SK-N-SH (cell line): ENCODE measurements at regions of chr3 and their contacts with region 1.

Region 1: DNA sequence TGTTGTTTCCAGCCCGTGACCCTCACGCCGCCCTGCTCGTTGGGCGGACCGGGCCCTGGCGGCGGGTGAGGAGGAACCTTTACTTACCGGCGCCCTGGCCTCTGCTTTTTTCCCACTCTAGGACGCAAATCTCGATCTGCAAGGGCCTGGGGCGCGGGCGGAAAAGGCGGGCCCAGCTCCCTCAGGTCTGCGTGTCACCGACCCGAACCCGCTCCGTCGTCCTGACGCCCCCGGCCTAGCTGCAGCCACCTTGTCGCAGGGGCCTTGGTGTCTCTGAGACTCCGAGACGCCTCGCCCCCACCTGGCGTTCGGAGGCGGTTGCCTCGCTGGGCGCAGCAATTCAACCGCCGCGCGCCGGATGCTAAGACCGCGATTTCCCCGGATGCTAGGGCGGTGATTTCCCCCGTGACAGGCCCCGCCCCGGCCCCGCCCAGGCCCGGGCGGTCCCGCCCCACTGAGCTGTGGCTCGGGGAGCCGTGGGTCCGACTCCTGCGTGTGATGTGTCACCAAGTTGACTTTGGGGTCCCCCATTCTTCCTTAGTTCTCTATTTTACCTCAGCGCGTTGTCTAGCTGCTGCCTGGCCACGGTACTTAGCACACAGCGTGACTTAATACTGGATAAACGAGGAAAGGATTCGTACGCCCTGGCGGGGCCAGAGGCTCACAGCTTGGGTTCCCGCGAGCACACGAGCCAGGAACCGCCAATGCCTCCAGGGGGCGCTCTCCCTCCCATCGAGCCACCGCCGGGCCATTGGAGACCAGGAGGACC is at the start of gene RPL39L:
- DNase-seq: peak; percentile 96
- H3K4me3 ChIP-seq: peak within 1 kb of the TSS; percentile 64 to 92
- H3K27ac ChIP-seq: peak within 1 kb of the TSS; percentile 42 to 65
- H3K4me1 ChIP-seq: no peaks in the 10 kb centered on the region; a peak in 1 of 4 replicates
- H3K27me3 ChIP-seq: no peaks in the 10 kb centered on the region; the same call in 1 of the 2 replicates
- CTCF ChIP-seq: peak; percentile 97
- EP300 ChIP-seq: no peak
- RAD21 ChIP-seq: peak; percentile 54
- polyA plus RNA-seq, gene RPL39L: 21.0 and 25.3 TPM in 2 replicates

Region 2: GRCh38 chr3:186849374-186849975 is 289.8 kb before region 1 on chr3:
- CTCF ChIA-PET with region 1: interaction called, 21 read pairs
- POLR2A ChIA-PET with region 1: no interaction called
- DNase-seq: peak; percentile 60
- H3K4me3 ChIP-seq: no peak overlapping the region; a peak in 1 of 4 replicates
- H3K27ac ChIP-seq: no peak overlapping the region
- H3K4me1 ChIP-seq: no peaks in the 10 kb centered on the region
- H3K27me3 ChIP-seq: peaks cover 17% of the 10 kb centered on the region; the same call in 1 of the 2 replicates
- CTCF ChIP-seq: peak; percentile 66
- EP300 ChIP-seq: no peak
- RAD21 ChIP-seq: peak; percentile 80

Region 3: GRCh38 chr3:186869253-186870100 is 269.8 kb before region 1 on chr3:
- CTCF ChIA-PET with region 1: no interaction called
- POLR2A ChIA-PET with region 1: no interaction called
- DNase-seq: no peak
- H3K4me3 ChIP-seq: no peak overlapping the region
- H3K27ac ChIP-seq: peak overlapping the region in 1 of 2 experiments; percentile 24; a peak in 2 of 4 replicates
- H3K4me1 ChIP-seq: peaks cover 0 to 4% of the 10 kb centered on the region in 2 experiments; a peak in 1 of 4 replicates
- H3K27me3 ChIP-seq: no peaks in the 10 kb centered on the region
- CTCF ChIP-seq: no peak
- EP300 ChIP-seq: no peak
- RAD21 ChIP-seq: no peak

Region 4: DNA sequence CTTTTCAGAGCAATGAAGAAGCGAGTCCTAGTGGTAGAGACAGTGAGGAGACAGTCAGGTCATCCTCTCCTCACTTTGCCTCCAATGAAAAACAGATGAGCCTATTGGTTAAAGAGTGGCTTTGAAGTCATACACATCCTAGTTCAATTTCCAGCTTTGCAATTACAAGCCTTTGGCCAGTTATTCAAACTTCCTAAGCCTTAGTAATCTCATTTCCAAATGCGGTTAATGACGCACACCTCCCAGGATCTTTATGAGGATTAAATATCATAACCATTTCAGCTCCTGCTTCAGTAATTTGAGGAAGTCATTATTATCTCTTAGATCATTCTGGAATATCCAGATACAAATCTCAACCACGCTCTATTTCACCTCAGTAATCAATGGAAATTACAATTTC is 219.0 kb before region 1 on chr3:
- CTCF ChIA-PET with region 1: interaction called, 19 read pairs
- POLR2A ChIA-PET with region 1: no interaction called
- DNase-seq: no peak
- H3K4me3 ChIP-seq: no peak overlapping the region
- H3K27ac ChIP-seq: no peak overlapping the region
- H3K4me1 ChIP-seq: peaks cover 0 to 18% of the 10 kb centered on the region in 2 experiments; a peak in 2 of 4 replicates
- H3K27me3 ChIP-seq: no peaks in the 10 kb centered on the region
- CTCF ChIP-seq: no peak
- EP300 ChIP-seq: no peak
- RAD21 ChIP-seq: no peak

Region 5: DNA sequence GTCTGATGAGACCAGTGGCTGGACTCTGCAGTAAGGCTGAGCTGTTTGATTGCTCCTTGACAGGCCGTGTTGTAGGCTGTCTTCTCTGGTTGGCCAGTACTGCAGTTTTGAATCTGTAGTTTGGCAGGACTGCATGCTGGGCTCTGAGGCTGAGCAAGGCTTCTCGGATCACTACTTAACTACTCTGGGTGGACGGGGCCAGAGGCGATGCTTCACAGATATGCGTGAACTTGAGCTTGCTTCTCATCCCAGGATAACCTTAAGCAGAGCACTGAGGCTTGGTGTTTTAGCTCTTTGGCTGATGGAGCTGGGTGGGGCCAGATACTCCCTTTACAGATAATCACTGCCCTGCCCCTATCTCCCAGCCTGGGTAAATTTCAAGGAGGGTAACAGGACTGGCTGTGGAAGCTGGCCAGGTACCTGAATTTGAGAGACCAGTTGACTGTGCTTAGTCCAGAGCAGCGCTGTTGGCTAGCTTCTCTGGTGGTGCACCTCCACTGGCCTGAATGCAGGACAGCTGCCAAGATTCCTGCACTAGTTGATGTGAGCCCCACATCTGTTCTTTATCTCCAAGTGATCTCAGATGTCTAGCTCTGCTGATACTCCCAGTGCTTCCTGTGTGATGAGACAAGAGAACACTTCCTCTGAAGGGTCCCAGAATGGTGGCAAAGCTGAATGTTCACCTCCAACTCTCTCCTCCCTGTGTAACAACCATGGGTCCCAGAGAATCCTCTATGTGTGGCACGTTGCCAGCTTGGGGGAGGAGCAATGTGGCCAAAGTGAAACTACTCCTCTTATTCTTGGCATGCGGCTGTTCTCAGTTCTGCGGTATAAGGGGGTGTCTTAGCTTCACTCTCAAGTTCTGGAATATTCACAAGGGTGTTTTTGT is 37.9 kb before region 1 on chr3:
- CTCF ChIA-PET with region 1: interaction called, 14 read pairs
- POLR2A ChIA-PET with region 1: no interaction called
- DNase-seq: peak; percentile 54
- H3K4me3 ChIP-seq: peak overlapping the region; percentile 40 to 55
- H3K27ac ChIP-seq: peak overlapping the region; percentile 55 to 78; a peak in 3 of 4 replicates
- H3K4me1 ChIP-seq: peaks cover 9 to 10% of the 10 kb centered on the region in 2 experiments
- H3K27me3 ChIP-seq: no peaks in the 10 kb centered on the region
- CTCF ChIP-seq: no peak
- EP300 ChIP-seq: peak in 1 of 2 experiments; percentile 27; a peak in 1 of 4 replicates
- RAD21 ChIP-seq: no peak

Region 6: GRCh38 chr3:187112934-187113793 is 26.1 kb before region 1 on chr3:
- CTCF ChIA-PET with region 1: interaction called, 30 read pairs
- POLR2A ChIA-PET with region 1: no interaction called
- DNase-seq: peak; percentile 16
- H3K4me3 ChIP-seq: no peak overlapping the region; a peak in 1 of 4 replicates
- H3K27ac ChIP-seq: no peak overlapping the region
- H3K4me1 ChIP-seq: no peaks in the 10 kb centered on the region
- H3K27me3 ChIP-seq: no peaks in the 10 kb centered on the region
- CTCF ChIP-seq: peak; percentile 70
- EP300 ChIP-seq: no peak
- RAD21 ChIP-seq: peak; percentile 60

Region 7: GRCh38 chr3:187120326-187120725 is 19.0 kb before region 1 on chr3:
- CTCF ChIA-PET with region 1: interaction called, 30 read pairs
- POLR2A ChIA-PET with region 1: no interaction called
- DNase-seq: no peak
- H3K4me3 ChIP-seq: no peak overlapping the region
- H3K27ac ChIP-seq: no peak overlapping the region
- H3K4me1 ChIP-seq: no peaks in the 10 kb centered on the region
- H3K27me3 ChIP-seq: no peaks in the 10 kb centered on the region
- CTCF ChIP-seq: no peak
- EP300 ChIP-seq: no peak
- RAD21 ChIP-seq: no peak

Region 8: DNA sequence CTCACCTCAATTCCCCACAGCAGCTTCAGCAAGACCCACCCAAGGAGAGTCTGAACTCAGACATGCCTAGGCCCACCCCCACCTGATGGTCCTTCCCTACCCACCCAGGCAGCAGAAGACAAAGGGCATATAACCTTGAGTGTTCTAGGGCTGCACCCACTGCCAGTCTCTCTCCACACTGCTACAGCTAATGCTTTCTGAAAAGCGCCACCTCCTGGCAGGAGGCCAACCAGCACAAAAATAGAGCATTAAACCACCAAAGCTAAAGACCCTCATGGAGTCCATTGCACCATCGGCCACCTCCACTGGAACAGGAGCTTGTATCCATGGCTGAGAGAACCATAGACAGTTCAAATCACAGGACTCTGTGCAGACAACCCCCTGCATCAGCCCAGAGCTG is 11.3 kb after region 1 on chr3:
- CTCF ChIA-PET with region 1: interaction called, 28 read pairs
- POLR2A ChIA-PET with region 1: interaction called, 4 read pairs
- DNase-seq: no peak
- H3K4me3 ChIP-seq: no peak overlapping the region
- H3K27ac ChIP-seq: no peak overlapping the region
- H3K4me1 ChIP-seq: no peaks in the 10 kb centered on the region
- H3K27me3 ChIP-seq: peaks cover 5% of the 10 kb centered on the region; the same call in 1 of the 2 replicates
- CTCF ChIP-seq: peak; percentile 36; the same call in 1 of the 2 replicates
- EP300 ChIP-seq: no peak
- RAD21 ChIP-seq: peak; percentile 22

Region 9: DNA sequence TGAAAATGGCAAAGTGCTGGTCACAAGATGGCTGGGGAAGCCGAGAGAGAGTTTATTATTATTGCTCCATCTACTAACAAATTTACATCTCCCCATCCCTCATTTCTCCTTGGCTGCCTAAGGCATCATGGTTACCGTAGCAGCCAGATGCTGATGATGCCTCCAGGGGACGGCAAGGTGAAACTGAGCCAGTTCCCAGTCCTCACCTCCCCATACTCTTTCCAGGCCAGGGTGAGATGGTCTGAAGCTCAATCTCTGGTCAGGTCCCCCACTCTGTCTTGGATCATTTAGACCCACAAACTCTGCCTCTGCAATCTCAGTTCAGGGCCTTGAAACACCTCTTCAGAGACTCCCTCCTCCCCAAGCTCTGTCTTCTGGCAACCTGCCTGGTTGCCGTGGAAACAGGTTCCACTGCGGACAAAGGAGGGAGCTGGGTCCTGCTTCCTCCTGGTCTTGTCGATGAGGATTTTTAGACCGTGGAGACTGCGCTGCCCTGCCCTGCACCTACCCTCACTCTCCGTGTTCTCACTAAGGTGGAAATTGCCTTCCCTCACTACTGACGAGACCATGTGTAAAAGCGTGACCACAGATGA is 57.8 kb after region 1 on chr3 and contains the start of gene RTP1:
- CTCF ChIA-PET with region 1: no interaction called
- POLR2A ChIA-PET with region 1: no interaction called
- DNase-seq: peak; percentile 25
- H3K4me3 ChIP-seq: no peak within 1 kb of the TSS
- H3K27ac ChIP-seq: no peak within 1 kb of the TSS
- H3K4me1 ChIP-seq: no peaks in the 10 kb centered on the region
- H3K27me3 ChIP-seq: peaks cover 35% of the 10 kb centered on the region; the same call in 1 of the 2 replicates
- CTCF ChIP-seq: no peak
- EP300 ChIP-seq: no peak
- RAD21 ChIP-seq: no peak
- polyA plus RNA-seq, gene RTP1: not detected in 2 replicates